Right cardiac atrium (tissue), 5 donors: ENCODE measurements at regions of chr7 and their contacts with region 1.

Region 1: DNA sequence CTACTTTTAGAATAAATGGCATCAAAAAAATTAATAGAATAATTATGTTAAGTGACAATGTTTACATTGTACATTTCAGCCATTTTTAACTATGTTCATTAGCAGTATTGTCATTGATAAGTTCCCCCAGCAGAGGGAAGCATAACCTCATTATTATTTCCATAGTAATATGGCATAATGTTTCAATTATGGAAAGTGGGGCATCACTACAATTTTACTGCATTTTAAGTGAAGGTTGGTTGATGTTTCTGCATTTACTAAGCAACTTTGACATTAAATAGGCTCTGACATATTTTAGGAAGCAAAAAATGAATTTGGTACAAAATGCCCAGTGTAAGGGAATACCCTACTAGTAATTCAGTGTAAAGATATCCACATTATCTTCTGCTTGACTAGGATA is 218.3 kb downstream of the SEMA3A start:
- DNase-seq: no peak
- ATAC-seq: no peak
- H3K4me3 ChIP-seq: no peak overlapping the region
- H3K27ac ChIP-seq: no peak overlapping the region
- H3K4me1 ChIP-seq: no peaks in the 10 kb centered on the region
- H3K27me3 ChIP-seq: no peaks in the 10 kb centered on the region

Region 2: GRCh38 chr7:84188786-84189405 is 212.6 kb after region 1 on chr7:
- intact Hi-C with region 1: loop called in 3 of 4 experiments (anchors 5 to 10 kb)
- DNase-seq: no peak
- ATAC-seq: peak in 1 of 2 donors; percentile 42
- H3K4me3 ChIP-seq: no peak overlapping the region
- H3K27ac ChIP-seq: no peak overlapping the region
- H3K4me1 ChIP-seq: no peaks in the 10 kb centered on the region
- H3K27me3 ChIP-seq: no peaks in the 10 kb centered on the region

Region 3: DNA sequence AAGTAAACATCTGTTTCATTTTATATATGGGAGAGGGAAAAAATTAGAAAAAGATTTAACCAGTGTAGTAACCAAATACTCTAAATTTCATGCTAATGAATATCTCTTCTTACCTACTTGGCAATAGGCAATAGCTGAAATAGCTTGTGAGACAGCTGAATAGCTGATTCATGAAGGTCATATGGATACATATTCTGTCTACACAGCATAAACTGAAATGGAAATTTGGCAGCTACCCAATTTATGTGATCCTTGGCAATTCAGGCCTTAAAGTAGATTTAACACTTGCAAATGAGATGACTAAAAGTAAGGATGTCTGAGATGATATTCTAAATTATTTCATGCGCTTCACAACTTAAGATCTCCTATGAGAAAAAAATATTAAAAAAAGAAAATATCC is 479.5 kb after region 1 on chr7:
- intact Hi-C with region 1: loop called in 2 of 4 experiments (anchors 10 kb)
- DNase-seq: no peak
- ATAC-seq: no peak
- H3K4me3 ChIP-seq: no peak overlapping the region
- H3K27ac ChIP-seq: no peak overlapping the region
- H3K4me1 ChIP-seq: no peaks in the 10 kb centered on the region
- H3K27me3 ChIP-seq: no peaks in the 10 kb centered on the region

Region 4: DNA sequence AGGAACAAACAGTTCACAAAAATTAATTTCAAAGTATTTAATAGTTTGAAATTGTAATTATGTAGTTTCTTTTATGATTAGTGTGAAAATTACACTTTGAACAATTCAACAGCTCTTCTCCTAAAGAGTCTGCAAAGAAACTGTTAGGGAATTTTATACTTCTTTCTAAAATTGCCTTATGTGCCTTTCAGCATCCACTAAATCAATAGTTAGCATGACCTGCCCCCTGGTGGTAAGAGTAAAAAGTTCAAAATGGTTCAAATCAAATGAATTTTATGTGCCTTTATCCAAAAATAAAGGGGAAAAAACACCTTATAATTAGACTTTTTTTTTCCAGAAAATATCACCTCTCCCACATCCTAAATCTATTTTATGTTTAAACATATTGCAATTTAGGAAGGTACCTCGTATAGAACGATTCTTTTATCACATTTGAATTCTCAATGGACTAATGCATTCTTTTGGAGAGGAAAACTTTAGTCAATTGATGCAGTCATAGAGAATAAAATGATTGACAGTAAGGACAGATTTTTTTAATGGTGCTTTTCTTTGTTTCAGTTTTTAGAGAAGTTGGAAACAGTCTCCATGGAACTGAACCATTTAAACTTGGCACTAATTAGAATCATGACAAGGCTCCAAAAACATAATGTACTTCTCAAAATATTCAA is 1046.9 kb after region 1 on chr7:
- intact Hi-C with region 1: loop called (anchors 5 to 10 kb)
- DNase-seq: no peak
- ATAC-seq: no peak
- H3K4me3 ChIP-seq: no peak overlapping the region
- H3K27ac ChIP-seq: no peak overlapping the region
- H3K4me1 ChIP-seq: no peaks in the 10 kb centered on the region
- H3K27me3 ChIP-seq: no peaks in the 10 kb centered on the region